ENCODE measurements at regions of chr5 and their contacts with region 1.

Region 1: GRCh38 chr5:140244525-140245025 is 58.3 kb downstream of the PFDN1 start:
- DNase-seq: peak; percentile 44 to 71 (median 51)
- H3K4me3 ChIP-seq: no peak overlapping the region
- H3K4me3 Mint-ChIP-seq: no peak overlapping the region
- H3K27ac ChIP-seq: no peak overlapping the region
- H3K27ac Mint-ChIP-seq: peak overlapping the region in 2 of 8 donors; percentile 53 to 71
- H3K4me1 ChIP-seq: peaks cover 10% of the 10 kb centered on the region
- H3K4me1 Mint-ChIP-seq: peaks cover 4 to 8% (median 5%) of the 10 kb centered on the region in 3 donors
- H3K27me3 ChIP-seq: no peaks in the 10 kb centered on the region
- H3K27me3 Mint-ChIP-seq: no peaks in the 10 kb centered on the region

Region 2: DNA sequence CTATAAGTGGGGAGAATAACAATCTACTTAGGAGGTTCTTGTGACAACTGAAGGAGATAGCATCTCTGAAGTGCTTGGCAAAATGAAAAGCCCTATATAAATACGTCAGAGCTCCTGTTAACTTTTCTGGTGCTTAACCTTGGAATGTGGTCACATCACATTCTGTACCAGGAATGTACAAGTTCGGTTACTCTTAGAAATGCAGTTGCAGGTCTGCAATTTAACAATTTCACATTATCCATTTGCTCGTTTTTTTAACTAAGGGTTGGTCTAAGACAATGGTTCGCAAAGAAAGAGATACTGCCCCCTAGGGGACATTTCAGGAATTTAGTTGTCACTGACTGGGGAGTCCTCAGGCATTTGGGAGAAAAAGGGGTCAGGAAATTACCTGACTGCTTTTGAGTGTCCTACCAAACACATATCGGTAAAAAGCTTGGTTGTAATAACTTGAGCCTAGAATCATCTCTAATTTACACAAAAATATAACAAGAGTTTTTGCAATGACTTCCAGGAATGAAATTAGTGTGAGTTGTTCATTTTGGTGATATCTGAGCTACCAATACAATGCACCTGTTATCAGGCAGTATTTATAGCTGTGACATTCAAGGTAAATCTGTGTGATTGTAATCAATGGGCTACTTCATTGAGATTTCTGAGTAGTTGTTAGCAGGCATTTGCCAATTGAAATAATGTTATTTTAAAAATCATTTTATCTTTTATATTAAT is 107.2 kb after region 1 on chr5:
- CTCF ChIA-PET with region 1: interaction called, 69 read pairs
- POLR2A ChIA-PET with region 1: no interaction called
- DNase-seq: peak in 4 of 5 donors; percentile 42 to 77 (median 67)
- H3K4me3 ChIP-seq: no peak overlapping the region
- H3K4me3 Mint-ChIP-seq: peak overlapping the region in 1 of 7 donors; percentile 47
- H3K27ac ChIP-seq: no peak overlapping the region
- H3K27ac Mint-ChIP-seq: no peak overlapping the region
- H3K4me1 ChIP-seq: peaks cover 9% of the 10 kb centered on the region
- H3K4me1 Mint-ChIP-seq: peaks cover 3 to 10% (median 5%) of the 10 kb centered on the region in 3 donors
- H3K27me3 ChIP-seq: no peaks in the 10 kb centered on the region
- H3K27me3 Mint-ChIP-seq: peaks cover 19 to 42% of the 10 kb centered on the region in 2 donors